ENCODE measurements at regions of chr20 and their contacts with region 1.

Region 1: DNA sequence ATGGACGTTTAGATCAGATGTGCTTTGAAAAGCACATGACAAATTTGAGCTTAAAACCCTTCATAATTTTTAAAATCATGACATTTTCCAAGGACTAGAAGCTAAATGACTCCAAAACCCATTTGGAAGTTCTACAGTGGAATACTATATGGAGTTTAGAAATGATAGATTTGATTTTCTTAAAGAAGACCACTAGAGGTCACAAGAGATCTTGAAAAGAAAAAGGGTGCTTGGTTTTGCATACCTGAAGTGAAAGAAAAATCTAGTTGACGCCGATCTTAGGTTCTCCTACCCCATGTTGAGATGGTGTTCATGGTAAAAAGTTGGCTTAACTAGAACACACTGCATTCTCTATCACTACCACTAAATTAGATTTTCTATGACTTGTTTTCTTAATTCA is 31.5 kb downstream of the CFAP61 start:
- DNase-seq: no peak
- ATAC-seq: no peak
- H3K4me3 ChIP-seq: no peak overlapping the region
- H3K27ac ChIP-seq: no peak overlapping the region
- H3K4me1 ChIP-seq: no peaks in the 10 kb centered on the region
- H3K27me3 ChIP-seq: no peaks in the 10 kb centered on the region

Region 2: DNA sequence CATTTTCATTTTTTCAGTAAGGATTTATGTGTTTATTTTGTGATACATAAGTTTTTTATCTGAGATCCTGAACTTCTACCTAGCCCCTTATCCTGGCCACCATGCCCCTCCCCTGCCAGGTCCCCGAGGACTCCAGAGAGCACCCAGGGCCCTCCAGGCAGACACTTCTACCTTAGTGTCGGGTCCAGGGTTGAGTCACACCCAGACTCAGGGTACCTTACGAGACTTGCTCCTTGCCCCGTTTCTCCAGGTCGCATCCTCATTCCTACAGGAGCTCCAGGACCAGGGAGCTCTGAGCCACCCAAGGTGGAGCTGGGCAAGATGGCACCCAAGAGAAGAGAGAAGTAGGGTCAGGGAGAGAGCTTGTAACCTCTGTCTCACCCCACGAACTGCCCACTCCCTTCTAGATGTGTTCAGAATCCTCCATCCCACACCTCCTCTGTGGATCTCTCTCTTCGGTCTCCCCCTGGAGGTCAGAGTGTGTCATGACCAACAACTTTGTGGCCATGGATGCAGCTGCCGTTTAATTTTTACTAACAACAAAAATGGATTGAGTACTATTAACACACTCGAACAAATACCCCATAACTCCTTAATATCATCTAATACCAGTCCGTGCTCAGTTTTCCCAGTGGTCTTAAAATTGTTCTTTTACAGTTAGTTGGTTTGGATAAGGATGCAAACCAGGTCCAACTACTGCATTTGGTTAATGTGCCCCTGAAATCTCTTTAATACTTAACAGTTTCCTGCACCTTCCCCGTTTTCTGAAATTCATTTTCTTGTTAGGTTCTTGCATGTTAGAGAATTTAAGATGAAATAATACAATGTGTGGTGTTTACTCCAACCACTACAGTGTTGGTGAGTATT is 153.5 kb after region 1 on chr20:
- intact Hi-C with region 1: loop called (anchors 2 to 5 kb)
- DNase-seq: no peak
- ATAC-seq: no peak
- H3K4me3 ChIP-seq: no peak overlapping the region
- H3K27ac ChIP-seq: no peak overlapping the region
- H3K4me1 ChIP-seq: no peaks in the 10 kb centered on the region
- H3K27me3 ChIP-seq: no peaks in the 10 kb centered on the region

Measured in aorta (tissue), 5 donors.